GM18951 (cell line): ENCODE measurements at regions of chr15 and their contacts with region 1.

Region 1: DNA sequence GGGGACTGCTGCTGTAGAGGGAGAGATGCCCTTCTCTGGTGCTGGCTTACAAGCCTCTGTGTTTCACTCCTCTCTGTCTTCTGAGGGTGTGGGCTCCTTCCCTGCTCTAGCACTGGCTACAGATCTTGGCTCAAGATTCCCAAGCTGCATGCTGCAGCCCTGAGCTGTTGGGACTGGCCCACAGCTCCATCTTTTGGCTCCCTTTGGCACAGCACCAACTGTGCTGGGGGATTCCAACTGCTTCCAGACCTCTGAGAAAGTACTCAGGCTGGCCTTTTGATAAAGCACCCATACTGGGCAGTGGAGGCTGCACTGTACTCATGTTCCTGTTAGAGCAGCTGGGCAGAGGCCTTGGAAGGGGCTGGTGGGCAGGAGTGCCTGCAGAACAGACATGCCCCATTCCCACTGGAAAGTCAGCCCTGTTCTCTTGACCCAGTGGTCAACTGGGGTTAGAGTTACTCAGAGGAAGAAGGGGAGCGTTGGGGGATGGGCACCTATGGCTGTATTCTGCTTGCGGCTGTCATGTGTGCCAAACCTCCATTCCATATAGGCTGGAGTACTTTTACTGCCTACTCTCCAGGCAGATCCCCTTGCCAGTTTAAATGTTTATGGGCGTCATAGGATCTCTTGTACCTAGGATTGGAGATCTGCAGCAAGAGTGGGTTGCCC is 55.7 kb downstream of the GALK2 start:
- POLR2A ChIP-seq: no peak

Region 2: GRCh38 chr15:49421991-49422390 is 196.2 kb after region 1 on chr15:
- in situ Hi-C with region 1: loop called (anchors 10 kb)
- POLR2A ChIP-seq: no peak